Gastrocnemius medialis (tissue), 4 donors: ENCODE measurements at regions of chrX and their contacts with region 1.

Region 1: DNA sequence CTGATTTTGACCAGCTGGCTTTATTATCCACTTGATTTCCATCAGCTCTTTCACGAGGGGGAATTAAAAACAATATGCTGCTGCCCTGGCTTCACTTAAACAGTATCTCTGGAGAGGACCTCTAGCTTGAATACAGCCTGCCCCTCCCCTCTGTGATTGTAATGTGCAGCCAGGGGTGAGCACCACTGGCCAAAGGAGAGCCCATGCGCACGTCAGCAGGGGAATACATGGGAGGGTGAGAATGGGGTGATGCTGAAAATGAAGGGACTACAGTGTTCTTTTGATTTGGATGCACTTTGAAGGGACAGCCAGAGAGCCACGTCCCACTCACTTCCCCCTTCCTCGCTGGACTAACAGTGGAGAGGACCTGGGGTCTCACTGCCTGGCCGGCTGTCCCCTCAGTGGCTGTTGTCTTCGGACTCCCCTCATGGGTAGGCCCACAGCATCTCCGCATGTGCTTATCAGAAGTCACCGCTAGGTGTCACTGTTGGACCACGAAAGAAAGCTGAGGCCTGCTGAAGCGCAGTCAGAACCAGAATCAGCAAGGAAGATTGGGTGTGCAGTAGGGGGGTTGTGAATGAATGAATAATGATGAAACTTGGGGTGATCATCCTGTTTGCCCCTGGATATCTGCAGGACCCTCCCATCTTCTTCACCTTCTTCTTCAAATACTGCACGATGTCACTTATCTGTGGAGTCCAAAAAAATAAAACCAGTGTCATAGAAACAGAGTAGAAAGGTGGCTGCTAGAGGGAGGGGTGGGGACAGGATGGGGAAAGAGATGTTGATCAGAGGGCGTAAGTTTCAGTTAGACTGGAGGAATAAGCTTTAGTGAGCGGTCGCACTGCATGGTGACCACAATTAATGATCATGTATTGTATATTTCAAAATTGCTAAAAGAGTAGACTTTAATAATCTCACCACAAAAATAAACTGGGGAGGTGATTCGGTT is 32.8 kb downstream of the CLCN4 start:
- DNase-seq: peak; percentile 34 to 48
- ATAC-seq: peak; percentile 75 to 91
- H3K4me3 ChIP-seq: no peak overlapping the region
- H3K27ac ChIP-seq: peak overlapping the region in 1 of 4 donors; percentile 52
- H3K4me1 ChIP-seq: peaks cover 0 to 2% of the 10 kb centered on the region in 2 donors
- H3K27me3 ChIP-seq: no peaks in the 10 kb centered on the region
- CTCF ChIP-seq: peak in 4 of 5 experiments; percentile 62 to 86 (median 84)
- POLR2A ChIP-seq: no peak

Region 2: DNA sequence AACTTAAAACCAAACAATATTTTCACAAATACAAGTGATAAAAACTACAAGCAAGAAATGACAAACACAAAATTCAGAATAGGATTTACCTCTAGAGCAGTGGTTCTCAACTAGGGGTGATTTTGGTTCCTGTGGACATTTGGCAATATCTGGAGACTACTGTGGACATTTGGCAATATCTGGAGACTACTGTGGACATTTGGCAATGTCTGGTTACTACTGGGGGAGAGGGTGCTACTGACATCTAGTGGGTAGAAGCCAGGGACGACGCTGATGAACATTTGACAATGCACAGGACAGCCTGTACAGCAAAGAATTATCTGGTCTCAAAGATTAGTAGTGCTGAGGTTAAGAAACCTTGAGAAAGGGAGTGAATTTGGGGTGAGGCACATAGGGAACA is 137.0 kb after region 1 on chrX:
- in situ Hi-C with region 1: no loop called
- intact Hi-C with region 1: loop called (anchors 5 kb)
- DNase-seq: peak; percentile 3 to 11
- ATAC-seq: peak; percentile 65 to 73
- H3K4me3 ChIP-seq: no peak overlapping the region
- H3K27ac ChIP-seq: no peak overlapping the region
- H3K4me1 ChIP-seq: no peaks in the 10 kb centered on the region
- H3K27me3 ChIP-seq: no peaks in the 10 kb centered on the region
- CTCF ChIP-seq: peak in 2 of 5 experiments; percentile 15 to 23
- POLR2A ChIP-seq: no peak

Region 3: GRCh38 chrX:10636337-10636736 is 446.7 kb after region 1 on chrX:
- in situ Hi-C with region 1: no loop called
- intact Hi-C with region 1: loop called (anchors 5 kb)
- DNase-seq: no peak
- ATAC-seq: no peak
- H3K4me3 ChIP-seq: no peak overlapping the region
- H3K27ac ChIP-seq: no peak overlapping the region
- H3K4me1 ChIP-seq: no peaks in the 10 kb centered on the region
- H3K27me3 ChIP-seq: no peaks in the 10 kb centered on the region
- CTCF ChIP-seq: peak in 2 of 5 experiments; percentile 27 to 35
- POLR2A ChIP-seq: no peak

Region 4: DNA sequence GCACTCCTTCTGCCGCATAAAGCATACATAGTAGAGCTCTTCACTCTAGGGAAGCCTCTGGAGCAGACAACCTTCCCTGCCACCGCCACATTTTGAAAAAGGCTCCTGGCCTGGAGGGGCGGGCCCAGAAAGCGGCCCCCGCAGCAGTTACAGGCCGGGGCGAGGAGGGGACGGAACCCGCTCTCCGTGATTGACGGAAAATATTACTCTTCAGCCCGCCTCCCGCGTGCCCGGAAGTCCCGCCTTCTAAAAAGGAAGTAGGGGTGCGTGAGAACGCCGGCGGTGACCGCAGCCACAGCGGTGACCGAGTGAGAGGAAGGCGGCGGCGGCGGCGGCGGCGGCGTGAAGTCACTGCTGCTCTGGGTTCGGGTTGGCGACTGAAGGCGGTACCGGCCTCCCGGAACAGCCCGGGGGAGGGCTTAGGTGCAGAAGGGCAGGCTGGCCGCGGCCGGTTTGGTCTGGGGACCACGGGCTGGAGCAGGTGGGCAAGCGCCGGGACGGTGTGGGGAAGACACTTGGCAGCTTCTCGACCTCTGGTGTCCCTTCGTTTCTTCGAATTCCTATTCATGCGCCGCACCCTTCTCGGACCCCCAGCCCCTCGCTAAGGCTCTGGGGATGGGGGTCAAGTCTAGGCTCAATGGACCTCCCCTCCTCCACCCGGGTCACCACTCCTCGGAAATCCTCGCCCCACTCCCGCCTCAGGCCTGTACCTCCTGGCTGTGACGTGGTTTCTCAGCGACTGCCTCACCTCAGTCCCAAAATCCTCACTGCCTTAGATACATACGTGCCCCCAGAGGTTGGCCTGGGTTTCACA is 921.7 kb after region 1 on chrX and contains the start of gene HCCS:
- in situ Hi-C with region 1: loop called in 2 of 4 experiments (anchors 25 kb)
- intact Hi-C with region 1: no loop called
- DNase-seq: peak; percentile 69 to 82
- ATAC-seq: peak; percentile 92 to 98
- H3K4me3 ChIP-seq: peak within 1 kb of the TSS; percentile 65 to 81 (median 71)
- H3K27ac ChIP-seq: peak within 1 kb of the TSS; percentile 84 to 90 (median 88)
- H3K4me1 ChIP-seq: peaks cover 4 to 15% of the 10 kb centered on the region in 2 donors
- H3K27me3 ChIP-seq: no peaks in the 10 kb centered on the region
- CTCF ChIP-seq: no peak
- POLR2A ChIP-seq: peak; percentile 75 to 82
- total RNA-seq, gene HCCS: 10.4 to 25.2 (median 21.1) TPM

Region 5: DNA sequence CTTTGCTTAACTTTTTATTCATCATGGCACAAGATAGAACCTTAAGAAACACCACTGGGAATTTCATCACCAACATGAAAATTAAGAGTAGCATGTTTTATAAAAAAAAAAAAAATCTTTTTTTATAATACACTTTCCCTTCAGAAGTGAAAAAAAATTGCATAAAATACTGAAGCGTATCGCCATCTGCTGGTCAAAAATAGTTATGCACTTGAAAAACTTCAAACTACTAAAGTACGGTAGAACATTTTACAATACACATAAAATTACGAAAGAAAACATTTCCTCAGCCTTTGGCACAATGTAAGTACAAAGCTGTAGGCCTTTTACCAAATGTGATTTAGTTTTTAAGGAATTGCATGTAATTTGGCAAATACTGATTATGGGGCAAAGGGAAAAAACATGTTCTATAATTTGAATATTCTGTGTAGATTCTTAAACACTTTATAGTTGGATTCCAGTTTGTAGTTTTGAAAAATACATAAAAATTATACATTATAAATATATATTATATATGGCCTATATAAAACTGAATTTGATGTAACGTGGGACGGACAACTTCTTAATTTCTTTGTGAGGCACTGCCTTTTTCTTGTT is 948.0 kb after region 1 on chrX:
- in situ Hi-C with region 1: loop called in 2 of 4 experiments (anchors 10 to 25 kb)
- intact Hi-C with region 1: loop called (anchors 5 kb)
- DNase-seq: no peak
- ATAC-seq: no peak
- H3K4me3 ChIP-seq: no peak overlapping the region
- H3K27ac ChIP-seq: no peak overlapping the region
- H3K4me1 ChIP-seq: peaks cover 7% of the 10 kb centered on the region in 2 donors
- H3K27me3 ChIP-seq: no peaks in the 10 kb centered on the region
- CTCF ChIP-seq: peak; percentile 23 to 78 (median 48)
- POLR2A ChIP-seq: no peak